IMR-90 (cell line): ENCODE measurements at regions of chr4 and their contacts with region 1.

Region 1: DNA sequence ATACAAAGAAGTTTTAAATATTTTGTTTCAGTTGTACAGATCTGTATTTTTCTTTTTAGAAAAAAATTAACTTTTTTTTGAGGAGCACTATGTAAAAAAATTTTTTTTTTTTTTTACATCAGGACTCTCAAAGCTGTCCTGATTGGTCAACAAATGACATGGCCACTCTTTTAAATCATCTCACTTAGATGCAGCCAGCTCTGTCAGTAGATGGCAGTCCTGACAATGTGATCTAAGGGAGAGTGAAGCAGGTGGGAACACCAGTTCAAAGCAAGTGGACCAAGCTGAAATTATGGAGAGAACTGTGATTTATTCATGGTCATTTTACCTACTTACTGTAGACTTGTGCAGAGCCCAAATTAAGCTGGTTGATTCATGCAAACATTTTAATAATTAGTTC is 174.6 kb upstream of the GPRIN3 start:
- DNase-seq: peak; percentile 53
- ATAC-seq: peak; percentile 56; the same call in 1 of the 2 replicates
- H3K4me3 ChIP-seq: no peak overlapping the region
- H3K27ac ChIP-seq: no peak overlapping the region
- H3K4me1 ChIP-seq: no peaks in the 10 kb centered on the region
- H3K27me3 ChIP-seq: no peaks in the 10 kb centered on the region
- CTCF ChIP-seq: peak; percentile 41
- POLR2A ChIP-seq: no peak
- RAD21 ChIP-seq: peak; percentile 26; the same call in 1 of the 2 replicates

Region 2: GRCh38 chr4:88268913-88269312 is 1213.3 kb before region 1 on chr4:
- CTCF ChIA-PET with region 1: no interaction called
- POLR2A ChIA-PET with region 1: no interaction called
- dilution Hi-C with region 1: no loop called
- in situ Hi-C with region 1: no loop called
- intact Hi-C with region 1: no loop called
- DNase-seq: no peak
- ATAC-seq: no peak
- H3K4me3 ChIP-seq: no peak overlapping the region
- H3K27ac ChIP-seq: no peak overlapping the region
- H3K4me1 ChIP-seq: no peaks in the 10 kb centered on the region
- H3K27me3 ChIP-seq: no peaks in the 10 kb centered on the region
- CTCF ChIP-seq: no peak
- POLR2A ChIP-seq: no peak
- RAD21 ChIP-seq: no peak

Region 3: DNA sequence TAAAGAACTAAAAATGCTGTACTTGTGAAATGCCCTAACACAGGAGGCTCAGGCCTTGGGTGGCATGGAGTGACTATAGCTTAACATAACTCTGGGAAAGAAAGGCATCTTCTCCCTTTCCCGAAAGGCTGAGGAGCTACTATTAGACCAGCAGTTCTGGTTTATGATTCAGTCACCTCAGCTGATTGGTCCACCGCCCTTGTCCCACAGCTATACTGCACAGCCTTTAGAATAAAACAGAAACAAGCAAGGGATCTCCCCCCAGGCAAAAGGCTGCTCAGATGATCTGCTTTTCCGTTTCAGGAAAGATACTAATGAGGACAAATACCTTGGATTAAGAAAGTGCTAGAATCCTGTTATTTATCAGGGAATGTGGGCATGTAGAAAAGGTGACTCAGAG is 183.4 kb after region 1 on chr4:
- CTCF ChIA-PET with region 1: no interaction called
- POLR2A ChIA-PET with region 1: no interaction called
- dilution Hi-C with region 1: no loop called
- in situ Hi-C with region 1: no loop called
- intact Hi-C with region 1: no loop called
- DNase-seq: no peak
- ATAC-seq: no peak
- H3K4me3 ChIP-seq: no peak overlapping the region
- H3K27ac ChIP-seq: no peak overlapping the region
- H3K4me1 ChIP-seq: no peaks in the 10 kb centered on the region; the same call in 1 of the 2 replicates
- H3K27me3 ChIP-seq: peaks cover 2% of the 10 kb centered on the region; the same call in 1 of the 2 replicates
- CTCF ChIP-seq: no peak
- POLR2A ChIP-seq: no peak
- RAD21 ChIP-seq: no peak

Region 4: DNA sequence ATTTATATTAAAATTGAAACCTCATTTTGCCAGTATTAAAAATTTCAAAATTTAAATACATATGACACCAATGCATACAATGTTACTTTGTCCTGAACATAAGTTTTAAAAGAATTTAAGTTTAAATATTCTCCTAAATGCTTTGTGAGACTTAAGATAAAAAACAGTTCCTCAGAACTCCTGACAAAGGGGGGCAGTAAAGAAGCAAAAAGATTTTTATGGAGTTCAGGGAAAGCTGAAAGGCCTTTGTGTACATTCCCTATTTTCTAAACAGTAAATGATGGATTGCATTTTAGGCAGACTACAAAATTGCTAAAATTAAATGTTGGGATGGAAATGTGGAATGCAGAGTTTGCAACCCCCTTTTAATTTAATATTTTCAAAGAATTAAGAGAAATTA is 273.0 kb after region 1 on chr4:
- CTCF ChIA-PET with region 1: no interaction called
- POLR2A ChIA-PET with region 1: no interaction called
- dilution Hi-C with region 1: no loop called
- in situ Hi-C with region 1: no loop called
- intact Hi-C with region 1: loop called (anchors 5 kb)
- DNase-seq: no peak
- ATAC-seq: no peak
- H3K4me3 ChIP-seq: no peak overlapping the region
- H3K27ac ChIP-seq: no peak overlapping the region
- H3K4me1 ChIP-seq: peaks cover 8% of the 10 kb centered on the region
- H3K27me3 ChIP-seq: no peaks in the 10 kb centered on the region
- CTCF ChIP-seq: 0 out of 2 replicates have a peak, but pooled peaks have one; percentile 4
- POLR2A ChIP-seq: no peak
- RAD21 ChIP-seq: no peak

Region 5: DNA sequence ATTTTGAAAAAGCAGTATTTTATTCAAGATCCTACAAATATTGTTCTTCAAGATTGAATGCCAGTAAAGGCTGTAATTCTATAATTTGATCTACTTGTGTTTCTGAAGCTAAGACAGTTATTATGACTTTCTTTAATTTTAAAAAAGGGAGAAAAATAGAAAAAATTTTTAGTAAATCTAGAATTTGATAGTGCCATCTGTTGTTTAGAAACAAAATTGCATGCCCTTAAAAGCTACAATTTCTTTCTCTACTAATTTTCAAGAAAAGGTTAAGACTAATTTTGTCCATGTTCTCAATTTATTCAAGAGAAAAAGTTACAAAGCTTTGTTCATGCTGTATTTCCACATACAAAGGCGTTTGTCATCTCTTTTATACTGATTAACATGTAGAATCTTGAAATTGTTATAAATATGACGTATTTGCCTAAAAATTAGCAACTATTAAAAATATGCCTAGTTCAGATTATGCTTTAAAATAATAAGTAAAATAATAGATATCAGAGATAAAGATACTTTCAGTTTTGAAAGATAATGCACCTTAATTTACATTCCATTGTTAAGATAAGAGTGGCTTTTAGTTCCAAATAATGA is 386.8 kb after region 1 on chr4:
- CTCF ChIA-PET with region 1: interaction called, 8 read pairs
- POLR2A ChIA-PET with region 1: no interaction called
- dilution Hi-C with region 1: no loop called
- in situ Hi-C with region 1: loop called (anchors 25 kb)
- intact Hi-C with region 1: loop called (anchors 1 kb)
- DNase-seq: peak; percentile 5
- ATAC-seq: no peak
- H3K4me3 ChIP-seq: no peak overlapping the region
- H3K27ac ChIP-seq: no peak overlapping the region
- H3K4me1 ChIP-seq: no peaks in the 10 kb centered on the region
- H3K27me3 ChIP-seq: no peaks in the 10 kb centered on the region
- CTCF ChIP-seq: peak; percentile 56
- POLR2A ChIP-seq: no peak
- RAD21 ChIP-seq: peak; percentile 40